ENCODE measurements at regions of chr16 and their contacts with region 1.

Region 1: DNA sequence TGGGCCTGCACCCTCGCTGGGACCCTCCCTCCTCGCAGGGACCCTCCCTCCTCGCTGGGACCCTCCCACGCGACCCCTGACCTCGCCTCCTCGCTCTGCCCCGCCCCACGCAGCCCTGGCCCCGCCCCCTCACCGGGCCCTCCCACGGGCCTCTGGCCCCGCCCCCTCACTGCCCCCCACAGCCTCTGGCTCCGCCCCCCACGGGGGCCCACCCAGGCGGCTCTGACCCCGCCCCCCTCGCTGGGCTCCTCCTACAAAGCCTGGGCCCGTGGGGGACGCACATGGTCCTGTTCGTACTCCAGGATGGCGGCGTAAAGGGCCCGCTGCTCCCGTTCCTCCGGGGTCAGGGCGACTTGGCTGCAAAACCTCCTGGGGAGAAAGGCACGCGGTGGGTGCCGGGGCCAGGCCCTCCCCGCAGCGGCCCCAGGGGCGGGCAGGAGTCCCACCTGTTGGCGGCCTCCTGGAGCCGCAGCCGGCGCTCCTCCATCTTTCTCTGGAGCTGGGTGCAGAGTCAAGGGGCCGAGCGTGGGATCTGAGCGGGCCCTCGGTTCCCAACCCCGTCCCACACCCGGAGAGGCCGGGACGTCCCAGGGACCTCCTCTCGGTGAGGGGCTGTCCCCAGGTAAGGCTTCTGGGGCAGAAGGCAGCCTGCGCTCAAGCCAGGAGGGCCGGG is 9.0 kb downstream of the VPS9D1 start:
- DNase-seq: peak; percentile 55 to 87 (median 71)
- ATAC-seq: peak; percentile 98
- H3K4me3 ChIP-seq: peak overlapping the region; percentile 48 to 68
- H3K4me3 Mint-ChIP-seq: peak overlapping the region; percentile 65
- H3K27ac ChIP-seq: no peak overlapping the region
- H3K27ac Mint-ChIP-seq: no peak overlapping the region
- H3K4me1 ChIP-seq: peaks cover 12% of the 10 kb centered on the region
- H3K4me1 Mint-ChIP-seq: peaks cover 1% of the 10 kb centered on the region
- H3K27me3 ChIP-seq: no peaks in the 10 kb centered on the region
- H3K27me3 Mint-ChIP-seq: no peaks in the 10 kb centered on the region
- CTCF ChIP-seq: no peak

Region 2: DNA sequence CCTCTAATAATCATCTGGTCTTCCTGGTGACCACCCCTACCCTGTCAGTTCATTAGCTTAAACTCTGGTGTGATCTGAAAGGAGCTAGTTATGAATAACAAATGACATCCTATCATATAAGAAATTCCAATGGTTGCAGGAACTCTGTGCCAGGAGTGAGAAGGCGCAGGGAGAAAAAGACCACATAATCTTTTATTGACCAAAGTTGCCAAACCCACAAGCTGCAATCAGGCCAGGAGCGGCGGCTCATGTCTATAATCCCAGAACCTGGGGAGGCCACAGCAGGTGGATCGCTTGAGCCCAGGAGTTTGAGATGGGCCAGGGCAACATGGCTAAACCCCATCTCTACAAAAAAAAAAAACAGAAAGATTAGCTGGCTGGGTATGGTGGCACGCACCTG is 244.8 kb before region 1 on chr16:
- CTCF ChIA-PET with region 1: no interaction called
- POLR2A ChIA-PET with region 1: no interaction called
- intact Hi-C with region 1: no loop called
- DNase-seq: no peak
- ATAC-seq: no peak
- H3K4me3 ChIP-seq: no peak overlapping the region
- H3K4me3 Mint-ChIP-seq: peak overlapping the region; percentile 32
- H3K27ac ChIP-seq: no peak overlapping the region
- H3K27ac Mint-ChIP-seq: no peak overlapping the region
- H3K4me1 ChIP-seq: peaks cover 48% of the 10 kb centered on the region
- H3K4me1 Mint-ChIP-seq: peaks cover 72% of the 10 kb centered on the region
- H3K27me3 ChIP-seq: no peaks in the 10 kb centered on the region
- H3K27me3 Mint-ChIP-seq: no peaks in the 10 kb centered on the region
- CTCF ChIP-seq: no peak

Region 3: DNA sequence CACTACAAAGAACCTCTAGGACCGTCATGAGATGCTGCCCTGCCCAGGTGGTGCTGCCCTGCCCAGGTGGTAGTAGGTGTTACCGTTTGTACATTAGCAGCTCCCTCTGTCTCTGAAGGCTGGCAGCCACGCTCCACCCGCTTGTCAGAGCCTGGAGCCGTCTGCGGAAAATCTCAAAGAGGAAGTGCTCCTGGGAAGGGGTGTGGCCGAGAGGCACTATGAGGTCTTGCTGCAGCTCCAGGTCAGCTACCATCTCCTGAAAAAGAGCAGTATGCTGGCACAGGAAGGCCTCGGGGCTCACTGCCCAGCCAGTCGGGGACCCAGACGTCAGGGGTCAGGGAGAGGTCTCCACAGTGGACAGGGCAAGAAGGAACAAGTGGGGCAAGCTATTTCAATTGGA is 37.9 kb after region 1 on chr16:
- CTCF ChIA-PET with region 1: interaction called, 25 read pairs
- POLR2A ChIA-PET with region 1: interaction called, 3 read pairs
- intact Hi-C with region 1: no loop called
- DNase-seq: no peak
- ATAC-seq: no peak
- H3K4me3 ChIP-seq: no peak overlapping the region
- H3K4me3 Mint-ChIP-seq: no peak overlapping the region
- H3K27ac ChIP-seq: no peak overlapping the region
- H3K27ac Mint-ChIP-seq: no peak overlapping the region
- H3K4me1 ChIP-seq: peaks cover 27% of the 10 kb centered on the region
- H3K4me1 Mint-ChIP-seq: peaks cover 15% of the 10 kb centered on the region
- H3K27me3 ChIP-seq: no peaks in the 10 kb centered on the region
- H3K27me3 Mint-ChIP-seq: no peaks in the 10 kb centered on the region
- CTCF ChIP-seq: no peak

Region 4: DNA sequence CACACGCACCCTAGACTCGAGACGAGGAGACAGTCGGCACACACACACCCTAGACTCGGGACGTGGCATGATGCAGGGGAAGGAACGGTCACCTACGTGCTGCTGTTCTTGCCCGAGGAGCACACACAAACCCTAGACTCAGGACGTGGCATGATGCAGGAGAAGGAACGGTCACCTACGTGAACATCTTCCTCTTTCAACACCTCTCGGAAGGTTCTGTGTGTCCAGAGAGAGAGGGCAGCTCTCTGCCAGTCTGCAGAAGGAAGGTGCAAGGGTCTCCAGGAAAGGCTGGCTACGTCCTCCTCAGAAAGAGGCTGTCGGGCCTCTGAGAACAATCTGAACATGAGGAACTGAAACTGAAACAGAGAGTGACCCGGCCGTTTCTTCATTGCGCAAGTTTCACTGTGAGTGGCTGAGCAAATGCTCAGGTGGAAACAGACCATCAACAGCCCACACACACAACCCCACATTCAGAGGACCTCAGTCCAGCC is 53.0 kb after region 1 on chr16:
- CTCF ChIA-PET with region 1: interaction called, 7 read pairs
- POLR2A ChIA-PET with region 1: no interaction called
- intact Hi-C with region 1: loop called in 1 of 2 experiments (anchors 2 kb)
- DNase-seq: peak in 7 of 9 experiments; percentile 20 to 75 (median 54)
- ATAC-seq: peak; percentile 54
- H3K4me3 ChIP-seq: peak overlapping the region in 1 of 2 experiments; percentile 59
- H3K4me3 Mint-ChIP-seq: peak overlapping the region; percentile 79
- H3K27ac ChIP-seq: peak overlapping the region; percentile 1 to 88
- H3K27ac Mint-ChIP-seq: peak overlapping the region; percentile 89
- H3K4me1 ChIP-seq: peaks cover 15% of the 10 kb centered on the region
- H3K4me1 Mint-ChIP-seq: peaks cover 38% of the 10 kb centered on the region
- H3K27me3 ChIP-seq: no peaks in the 10 kb centered on the region
- H3K27me3 Mint-ChIP-seq: no peaks in the 10 kb centered on the region
- CTCF ChIP-seq: no peak